ENCODE measurements at regions of chr3 and their contacts with region 1.

Region 1: DNA sequence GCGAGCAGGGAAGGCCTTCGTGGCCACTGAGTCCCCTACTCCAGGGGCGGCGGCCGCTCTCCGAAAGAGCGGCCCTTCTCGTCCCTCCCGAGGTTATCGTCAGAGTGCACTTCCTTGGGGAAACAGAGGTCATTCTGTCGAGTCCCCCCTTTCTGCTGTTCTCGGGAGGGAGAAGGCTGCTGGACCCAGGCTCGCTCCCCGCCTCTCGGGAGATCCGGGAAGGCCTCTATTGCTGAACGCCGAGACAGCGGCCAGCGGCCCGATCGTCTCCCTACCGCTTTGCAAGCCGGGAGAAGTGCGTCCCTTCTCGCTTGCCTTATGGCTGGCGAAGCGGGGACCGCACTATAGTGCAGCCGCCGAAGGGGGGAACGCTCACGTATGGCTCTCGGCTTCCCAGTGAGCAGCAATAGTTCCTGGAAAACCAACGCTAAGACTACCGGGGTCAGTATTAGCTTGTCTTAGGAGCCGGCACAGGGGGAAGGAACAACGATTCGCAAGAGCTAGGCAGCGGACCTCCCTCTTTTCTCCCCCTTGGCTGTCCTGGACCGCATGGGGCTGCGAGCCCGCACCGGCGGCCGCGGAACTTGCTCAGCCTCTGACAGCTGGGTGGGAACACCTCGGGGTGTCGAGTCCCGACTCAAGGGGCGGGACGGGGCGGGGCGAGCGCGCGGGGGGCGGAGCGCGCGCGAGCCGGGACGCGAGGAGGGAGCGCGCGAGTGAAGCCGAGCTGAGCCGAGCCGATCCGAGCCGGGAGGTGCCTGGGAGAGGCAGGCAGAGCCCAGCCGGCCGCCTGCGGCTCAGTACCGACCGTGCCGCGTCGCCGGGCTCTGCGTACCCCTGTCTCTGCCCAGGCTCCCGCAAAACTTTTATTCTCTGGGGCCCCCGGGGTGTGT is 930 bp upstream of the PPM1L start:
- DNase-seq: peak in 1 of 2 donors; percentile 97
- H3K4me3 ChIP-seq: peak overlapping the region; percentile 85
- H3K27ac ChIP-seq: peak overlapping the region; percentile 98
- H3K4me1 ChIP-seq: peaks cover 34% of the 10 kb centered on the region
- H3K27me3 ChIP-seq: no peaks in the 10 kb centered on the region
- CTCF ChIP-seq: no peak
- POLR2A ChIP-seq: peak in 1 of 2 donors; percentile 76

Region 2: DNA sequence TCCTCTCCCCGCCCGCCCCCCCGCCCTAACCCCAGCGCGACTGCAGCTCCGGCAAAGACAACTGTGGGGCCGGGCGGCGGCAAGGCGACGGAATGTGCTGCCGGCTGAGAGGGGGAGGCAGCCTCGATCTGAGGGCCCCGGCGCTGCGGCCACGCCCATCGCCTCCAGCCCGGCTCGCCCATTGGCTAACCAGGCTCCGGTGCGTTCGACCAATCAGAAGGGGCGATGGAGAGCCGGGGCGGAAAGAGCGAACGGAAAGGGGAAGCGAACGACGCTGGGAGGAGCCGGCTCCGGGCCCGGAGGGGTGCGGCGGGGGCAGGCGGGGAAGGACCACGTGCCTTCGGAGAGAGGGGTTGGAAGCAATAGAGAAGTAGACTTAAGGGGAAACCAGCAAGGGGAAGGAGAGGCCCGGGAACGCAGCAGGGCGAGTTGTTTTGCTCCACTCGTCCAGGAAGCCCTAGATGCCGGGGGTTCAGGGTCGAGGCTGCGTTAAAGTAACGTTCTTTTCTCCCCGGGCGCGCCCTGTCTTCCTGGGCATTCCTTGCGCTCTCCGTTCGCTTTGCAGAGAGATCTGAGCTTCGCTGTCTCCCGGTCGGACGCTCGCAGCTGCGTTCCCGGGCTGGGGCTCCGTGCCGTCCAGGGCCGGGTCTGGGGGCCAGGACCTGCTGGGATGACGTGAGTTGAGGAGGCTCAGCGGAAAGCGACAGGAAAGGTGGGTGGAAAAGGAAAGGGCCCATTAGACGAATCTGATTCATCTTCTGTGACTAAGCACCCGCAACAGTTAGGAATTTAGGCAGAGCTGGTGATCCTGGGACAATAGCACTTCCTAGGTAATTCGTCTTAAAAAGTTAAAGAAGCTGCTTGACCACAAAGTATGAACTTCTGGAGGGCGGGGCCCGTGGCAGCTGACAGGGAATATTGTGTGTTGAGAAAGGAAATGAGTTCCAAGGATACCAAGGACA is 189.4 kb before region 1 on chr3 and contains the start of gene KPNA4:
- intact Hi-C with region 1: loop called (anchors 10 kb)
- DNase-seq: peak in 1 of 2 donors; percentile 99
- H3K4me3 ChIP-seq: peak within 1 kb of the TSS; percentile 87 to 90
- H3K27ac ChIP-seq: peak within 1 kb of the TSS; percentile 97
- H3K4me1 ChIP-seq: peaks cover 45% of the 10 kb centered on the region
- H3K27me3 ChIP-seq: no peaks in the 10 kb centered on the region
- CTCF ChIP-seq: no peak
- POLR2A ChIP-seq: peak in 1 of 2 donors; percentile 33
- total RNA-seq, gene KPNA4: 24.8 TPM